Right lobe of liver (tissue), 6 donors: ENCODE measurements at regions of chr22 and their contacts with region 1.

Region 1: DNA sequence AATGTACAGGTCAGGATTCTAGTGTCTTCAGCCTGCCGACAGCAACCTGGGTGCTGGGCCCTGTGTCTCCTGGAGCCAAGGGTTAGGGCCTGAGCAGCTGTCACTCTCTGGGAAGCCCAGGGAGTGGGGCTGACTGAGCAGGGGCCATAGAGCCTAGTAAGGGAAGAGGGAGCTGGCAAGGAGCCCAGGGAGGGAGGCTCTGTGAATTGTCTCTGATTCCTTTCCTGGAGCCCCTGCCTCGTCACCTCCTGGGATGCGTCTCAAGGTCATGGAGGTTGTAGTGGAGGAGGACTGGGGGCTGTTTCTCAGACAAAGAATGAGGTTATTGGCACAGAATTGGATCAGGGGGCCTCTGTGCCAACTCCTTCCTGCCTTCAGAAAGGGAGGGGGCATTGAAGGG is 11.8 kb downstream of the SOX10 start:
- DNase-seq: no peak
- ATAC-seq: no peak
- H3K4me3 ChIP-seq: no peak overlapping the region
- H3K27ac ChIP-seq: no peak overlapping the region
- H3K4me1 ChIP-seq: no peaks in the 10 kb centered on the region
- H3K27me3 ChIP-seq: no peaks in the 10 kb centered on the region
- CTCF ChIP-seq: no peak
- POLR2A ChIP-seq: no peak

Region 2: GRCh38 chr22:37824674-37825641 is 147.6 kb before region 1 on chr22:
- intact Hi-C with region 1: loop called in 1 of 2 experiments (anchors 10 kb)
- DNase-seq: no peak
- ATAC-seq: peak in 2 of 4 donors; percentile 3 to 24
- H3K4me3 ChIP-seq: peak overlapping the region in 1 of 3 donors; percentile 16
- H3K27ac ChIP-seq: no peak overlapping the region
- H3K4me1 ChIP-seq: peaks cover 0 to 5% (median 0%) of the 10 kb centered on the region in 4 donors
- H3K27me3 ChIP-seq: no peaks in the 10 kb centered on the region
- CTCF ChIP-seq: no peak
- POLR2A ChIP-seq: no peak